ENCODE measurements at regions of chr3 and their contacts with region 1.

Region 1: GRCh38 chr3:48273594-48274211 is 32.8 kb downstream of the ZNF589 start:
- DNase-seq: peak; percentile 51 to 66 (median 60)
- H3K4me3 ChIP-seq: no peak overlapping the region
- H3K4me3 Mint-ChIP-seq: no peak overlapping the region
- H3K27ac ChIP-seq: no peak overlapping the region
- H3K27ac Mint-ChIP-seq: peak overlapping the region in 2 of 7 donors; percentile 12 to 74
- H3K4me1 ChIP-seq: peaks cover 15% of the 10 kb centered on the region
- H3K4me1 Mint-ChIP-seq: peaks cover 14 to 27% (median 21%) of the 10 kb centered on the region in 4 donors
- H3K27me3 ChIP-seq: no peaks in the 10 kb centered on the region
- H3K27me3 Mint-ChIP-seq: no peaks in the 10 kb centered on the region

Region 2: GRCh38 chr3:48548729-48549705 is 275.3 kb after region 1 on chr3:
- CTCF ChIA-PET with region 1: interaction called, 10 read pairs
- POLR2A ChIA-PET with region 1: no interaction called
- intact Hi-C with region 1: loop called (anchors 1 kb)
- DNase-seq: peak; percentile 77 to 82 (median 78)
- H3K4me3 ChIP-seq: no peak overlapping the region
- H3K4me3 Mint-ChIP-seq: no peak overlapping the region
- H3K27ac ChIP-seq: no peak overlapping the region
- H3K27ac Mint-ChIP-seq: peak overlapping the region in 2 of 7 donors; percentile 17 to 35
- H3K4me1 ChIP-seq: peaks cover 8% of the 10 kb centered on the region
- H3K4me1 Mint-ChIP-seq: peaks cover 5 to 21% (median 6%) of the 10 kb centered on the region in 4 donors
- H3K27me3 ChIP-seq: no peaks in the 10 kb centered on the region
- H3K27me3 Mint-ChIP-seq: no peaks in the 10 kb centered on the region